Spleen (tissue), 13 donors: ENCODE measurements at regions of chr15 and their contacts with region 1.

Region 1: GRCh38 chr15:48358229-48358641 is 27.0 kb downstream of the DUT start:
- DNase-seq: no peak
- H3K4me3 ChIP-seq: no peak overlapping the region
- H3K27ac ChIP-seq: no peak overlapping the region
- H3K4me1 ChIP-seq: peaks cover 0 to 15% (median 9%) of the 10 kb centered on the region in 6 donors
- H3K27me3 ChIP-seq: no peaks in the 10 kb centered on the region
- CTCF ChIP-seq: peak in 10 of 11 experiments; percentile 8 to 60 (median 44)
- POLR2A ChIP-seq: no peak

Region 2: GRCh38 chr15:47820780-47821319 is 537.4 kb before region 1 on chr15:
- intact Hi-C with region 1: no loop called
- DNase-seq: no peak
- H3K4me3 ChIP-seq: no peak overlapping the region
- H3K27ac ChIP-seq: no peak overlapping the region
- H3K4me1 ChIP-seq: no peaks in the 10 kb centered on the region
- H3K27me3 ChIP-seq: peaks cover 0 to 4% (median 0%) of the 10 kb centered on the region in 7 donors
- CTCF ChIP-seq: no peak
- POLR2A ChIP-seq: no peak

Region 3: DNA sequence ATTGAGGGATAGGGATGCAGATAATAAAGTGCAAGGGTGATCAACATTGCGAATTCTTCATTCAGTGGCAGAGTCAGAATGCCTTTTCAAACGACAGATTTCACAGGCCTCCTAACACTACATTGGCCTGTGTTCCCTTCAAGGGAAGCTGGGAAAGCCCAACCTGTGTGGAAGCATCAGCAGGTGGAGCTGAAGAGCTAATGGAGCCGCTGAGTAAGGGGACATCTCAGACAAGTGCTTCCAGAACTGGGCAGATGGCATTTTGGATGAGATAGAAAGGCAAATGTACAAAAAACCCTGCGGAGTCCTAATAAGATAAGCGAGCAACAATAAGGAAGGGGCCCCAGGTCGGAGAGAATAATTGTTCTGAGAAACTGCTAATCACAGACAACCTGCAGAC is 246.0 kb before region 1 on chr15:
- intact Hi-C with region 1: no loop called
- DNase-seq: no peak
- H3K4me3 ChIP-seq: no peak overlapping the region
- H3K27ac ChIP-seq: no peak overlapping the region
- H3K4me1 ChIP-seq: no peaks in the 10 kb centered on the region
- H3K27me3 ChIP-seq: peaks cover 0 to 14% (median 0%) of the 10 kb centered on the region in 7 donors
- CTCF ChIP-seq: no peak
- POLR2A ChIP-seq: no peak

Region 4: GRCh38 chr15:48800811-48801455 is 442.7 kb after region 1 on chr15:
- intact Hi-C with region 1: loop called (anchors 5 kb)
- DNase-seq: no peak
- H3K4me3 ChIP-seq: no peak overlapping the region
- H3K27ac ChIP-seq: no peak overlapping the region
- H3K4me1 ChIP-seq: peaks cover 0 to 27% (median 4%) of the 10 kb centered on the region in 6 donors
- H3K27me3 ChIP-seq: no peaks in the 10 kb centered on the region
- CTCF ChIP-seq: peak in 7 of 11 experiments; percentile 49 to 63 (median 53)
- POLR2A ChIP-seq: no peak